Aorta (tissue), 5 donors: ENCODE measurements at regions of chr7 and their contacts with region 1.

Region 1: GRCh38 chr7:93194386-93194785 is 31.9 kb downstream of the HEPACAM2 start:
- DNase-seq: no peak
- ATAC-seq: no peak
- H3K4me3 ChIP-seq: no peak overlapping the region
- H3K27ac ChIP-seq: no peak overlapping the region
- H3K4me1 ChIP-seq: no peaks in the 10 kb centered on the region
- H3K27me3 ChIP-seq: no peaks in the 10 kb centered on the region

Region 2: DNA sequence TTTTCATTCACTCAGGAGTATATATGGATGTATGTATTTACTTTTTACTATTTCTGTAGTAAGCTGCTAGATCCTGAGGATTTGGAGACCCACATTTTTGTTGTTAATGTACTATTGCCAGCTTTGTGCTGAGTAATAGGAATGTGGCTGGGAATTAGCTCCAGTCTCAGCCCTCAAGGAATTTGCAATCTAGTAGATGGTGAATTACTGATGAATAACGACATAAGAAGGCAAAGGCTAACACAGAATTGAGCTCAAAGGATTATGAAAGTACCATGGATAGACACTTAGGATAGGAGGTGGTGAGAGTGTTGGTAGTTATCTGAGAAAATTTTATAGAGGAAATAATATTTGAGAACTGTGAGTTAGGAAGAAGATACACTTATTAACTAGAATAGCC is 1335.1 kb after region 1 on chr7:
- intact Hi-C with region 1: loop called in 1 of 2 experiments (anchors 10 kb)
- DNase-seq: no peak
- ATAC-seq: no peak
- H3K4me3 ChIP-seq: no peak overlapping the region
- H3K27ac ChIP-seq: no peak overlapping the region
- H3K4me1 ChIP-seq: peaks cover 0 to 2% of the 10 kb centered on the region in 2 donors
- H3K27me3 ChIP-seq: no peaks in the 10 kb centered on the region